Transverse colon (tissue), 4 donors: ENCODE measurements at regions of chrX and their contacts with region 1.

Region 1: DNA sequence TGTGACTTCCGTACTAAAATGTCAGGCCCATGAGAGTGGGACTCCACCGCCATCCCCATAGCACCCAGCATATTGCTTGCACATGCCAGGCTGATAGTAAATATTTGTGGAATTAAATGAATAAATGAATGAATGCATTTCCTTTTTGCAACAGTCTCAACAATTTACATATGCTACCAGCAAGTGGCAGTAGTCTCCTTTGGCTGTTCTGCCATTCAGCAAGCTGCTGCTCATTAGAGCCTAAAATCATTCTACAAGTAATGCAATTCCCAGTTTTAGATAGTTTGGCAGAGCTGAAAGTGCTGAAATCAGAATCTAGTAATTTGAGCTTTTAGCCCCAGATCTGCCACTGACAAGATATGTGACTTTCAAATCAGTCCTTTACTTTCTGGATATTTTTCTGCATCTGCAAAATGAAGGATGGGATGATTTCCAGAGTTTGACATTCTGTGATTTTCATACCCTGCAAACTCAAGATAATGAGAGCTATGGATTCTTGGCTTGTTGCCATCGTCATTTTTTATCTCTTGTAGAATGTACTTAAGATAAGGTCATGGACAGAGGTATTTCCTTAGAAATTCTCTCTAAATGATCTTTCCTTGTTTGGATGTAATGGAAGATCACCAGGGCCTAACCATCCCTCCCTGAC is 35.7 kb upstream of the INTS6L start:
- DNase-seq: no peak
- H3K4me3 ChIP-seq: no peak overlapping the region
- H3K27ac ChIP-seq: no peak overlapping the region
- H3K4me1 ChIP-seq: no peaks in the 10 kb centered on the region
- H3K27me3 ChIP-seq: no peaks in the 10 kb centered on the region
- CTCF ChIP-seq: peak; percentile 43 to 59 (median 52)
- EP300 ChIP-seq: no peak
- POLR2A ChIP-seq: no peak

Region 2: GRCh38 chrX:135543924-135544323 is 59.2 kb after region 1 on chrX:
- in situ Hi-C with region 1: no loop called
- intact Hi-C with region 1: no loop called
- DNase-seq: peak; percentile 30
- H3K4me3 ChIP-seq: no peak overlapping the region
- H3K27ac ChIP-seq: peak overlapping the region; percentile 45 to 61 (median 54)
- H3K4me1 ChIP-seq: peaks cover 0 to 13% (median 0%) of the 10 kb centered on the region in 4 donors
- H3K27me3 ChIP-seq: no peaks in the 10 kb centered on the region
- CTCF ChIP-seq: peak; percentile 16 to 51 (median 29)
- EP300 ChIP-seq: no peak
- POLR2A ChIP-seq: no peak

Region 3: GRCh38 chrX:135572436-135572835 is 87.7 kb after region 1 on chrX:
- in situ Hi-C with region 1: loop called in 2 of 4 experiments (anchors 10 to 25 kb)
- intact Hi-C with region 1: no loop called
- DNase-seq: no peak
- H3K4me3 ChIP-seq: no peak overlapping the region
- H3K27ac ChIP-seq: no peak overlapping the region
- H3K4me1 ChIP-seq: no peaks in the 10 kb centered on the region
- H3K27me3 ChIP-seq: no peaks in the 10 kb centered on the region
- CTCF ChIP-seq: peak; percentile 26 to 36 (median 31)
- EP300 ChIP-seq: no peak
- POLR2A ChIP-seq: no peak

Region 4: GRCh38 chrX:136021160-136021559 is 536.4 kb after region 1 on chrX:
- in situ Hi-C with region 1: no loop called
- intact Hi-C with region 1: no loop called
- DNase-seq: no peak
- H3K4me3 ChIP-seq: no peak overlapping the region
- H3K27ac ChIP-seq: no peak overlapping the region
- H3K4me1 ChIP-seq: no peaks in the 10 kb centered on the region
- H3K27me3 ChIP-seq: no peaks in the 10 kb centered on the region
- CTCF ChIP-seq: no peak
- EP300 ChIP-seq: no peak
- POLR2A ChIP-seq: no peak

Region 5: GRCh38 chrX:136431625-136432024 is 946.9 kb after region 1 on chrX:
- in situ Hi-C with region 1: no loop called
- intact Hi-C with region 1: no loop called
- DNase-seq: no peak
- H3K4me3 ChIP-seq: no peak overlapping the region
- H3K27ac ChIP-seq: no peak overlapping the region
- H3K4me1 ChIP-seq: no peaks in the 10 kb centered on the region
- H3K27me3 ChIP-seq: no peaks in the 10 kb centered on the region
- CTCF ChIP-seq: no peak
- EP300 ChIP-seq: no peak
- POLR2A ChIP-seq: no peak